Endothelial cell of umbilical vein (primary cell): ENCODE measurements at regions of chr19 and their contacts with region 1.

Region 1: DNA sequence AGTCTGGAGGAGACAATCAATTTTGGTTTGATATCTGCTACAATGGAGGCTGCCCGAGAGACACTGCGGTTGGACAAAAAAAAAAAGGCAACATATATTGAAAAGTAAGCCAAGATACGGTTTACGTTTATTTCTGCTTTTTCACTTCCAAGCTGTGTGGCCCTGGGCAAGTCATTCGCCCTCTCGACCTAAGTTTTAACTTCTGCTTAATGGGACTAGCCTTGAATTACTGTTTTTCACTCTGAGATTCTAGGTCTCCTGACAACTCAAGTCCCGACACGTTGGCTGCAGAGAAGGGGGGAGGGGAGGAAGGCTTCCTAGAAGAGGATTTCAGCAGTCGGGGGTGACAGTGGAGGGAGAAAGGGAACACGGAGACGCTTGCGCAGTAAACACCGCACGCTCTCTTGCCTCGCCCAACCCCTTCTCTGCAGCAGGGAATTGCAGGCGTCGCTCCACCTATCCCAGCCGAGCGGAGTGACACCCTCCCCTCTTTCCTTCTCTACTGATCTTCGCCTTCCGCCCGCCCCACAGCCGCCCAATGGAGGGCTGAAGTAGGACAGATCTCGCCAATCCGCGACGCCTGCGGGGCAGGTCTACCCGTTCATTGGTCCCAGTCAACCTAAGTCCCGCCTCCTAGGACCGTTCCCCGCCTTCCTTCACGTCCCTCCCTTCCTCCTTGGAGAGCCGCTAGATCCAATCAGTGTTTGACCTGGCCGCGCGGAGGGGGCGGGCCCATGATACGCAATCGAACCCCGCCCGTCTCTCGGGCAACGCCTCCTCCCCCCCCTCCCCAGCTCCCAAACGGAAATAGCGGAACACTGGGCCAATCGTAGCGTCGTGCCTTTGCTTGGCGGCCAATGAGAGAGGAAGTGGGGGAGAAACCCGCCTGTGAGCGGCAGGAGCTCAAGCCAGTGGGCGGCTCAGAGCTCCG is 529 bp upstream of the AP2A1 start:
- DNase-seq: peak; percentile 100
- H3K4me3 ChIP-seq: peak overlapping the region in 2 of 3 experiments; percentile 49 to 97
- H3K27ac ChIP-seq: peak overlapping the region; percentile 41
- H3K4me1 ChIP-seq: peaks cover 12% of the 10 kb centered on the region
- H3K27me3 ChIP-seq: no peaks in the 10 kb centered on the region
- CTCF ChIP-seq: no peak
- POLR2A ChIP-seq: peak; percentile 72

Region 2: GRCh38 chr19:49712397-49712859 is 53.8 kb before region 1 on chr19:
- CTCF ChIA-PET with region 1: interaction called, 4 read pairs
- POLR2A ChIA-PET with region 1: no interaction called
- dilution Hi-C with region 1: no loop called
- intact Hi-C with region 1: loop called (anchors 1 kb)
- DNase-seq: no peak
- H3K4me3 ChIP-seq: no peak overlapping the region
- H3K27ac ChIP-seq: no peak overlapping the region
- H3K4me1 ChIP-seq: no peaks in the 10 kb centered on the region
- H3K27me3 ChIP-seq: no peaks in the 10 kb centered on the region
- CTCF ChIP-seq: no peak
- POLR2A ChIP-seq: no peak

Region 3: GRCh38 chr19:49817964-49818648 is 51.8 kb after region 1 on chr19 and contains the start of gene MED25:
- CTCF ChIA-PET with region 1: no interaction called
- POLR2A ChIA-PET with region 1: no interaction called
- dilution Hi-C with region 1: no loop called
- intact Hi-C with region 1: loop called (anchors 1 kb)
- DNase-seq: peak; percentile 93
- H3K4me3 ChIP-seq: peak within 1 kb of the TSS; percentile 83 to 95 (median 90)
- H3K27ac ChIP-seq: peak within 1 kb of the TSS; percentile 89
- H3K4me1 ChIP-seq: peaks cover 19% of the 10 kb centered on the region
- H3K27me3 ChIP-seq: no peaks in the 10 kb centered on the region
- CTCF ChIP-seq: peak in 1 of 2 donors; percentile 14
- POLR2A ChIP-seq: peak; percentile 75
- total RNA-seq, gene MED25: 55.8 and 62.9 TPM in 2 replicates

Region 4: DNA sequence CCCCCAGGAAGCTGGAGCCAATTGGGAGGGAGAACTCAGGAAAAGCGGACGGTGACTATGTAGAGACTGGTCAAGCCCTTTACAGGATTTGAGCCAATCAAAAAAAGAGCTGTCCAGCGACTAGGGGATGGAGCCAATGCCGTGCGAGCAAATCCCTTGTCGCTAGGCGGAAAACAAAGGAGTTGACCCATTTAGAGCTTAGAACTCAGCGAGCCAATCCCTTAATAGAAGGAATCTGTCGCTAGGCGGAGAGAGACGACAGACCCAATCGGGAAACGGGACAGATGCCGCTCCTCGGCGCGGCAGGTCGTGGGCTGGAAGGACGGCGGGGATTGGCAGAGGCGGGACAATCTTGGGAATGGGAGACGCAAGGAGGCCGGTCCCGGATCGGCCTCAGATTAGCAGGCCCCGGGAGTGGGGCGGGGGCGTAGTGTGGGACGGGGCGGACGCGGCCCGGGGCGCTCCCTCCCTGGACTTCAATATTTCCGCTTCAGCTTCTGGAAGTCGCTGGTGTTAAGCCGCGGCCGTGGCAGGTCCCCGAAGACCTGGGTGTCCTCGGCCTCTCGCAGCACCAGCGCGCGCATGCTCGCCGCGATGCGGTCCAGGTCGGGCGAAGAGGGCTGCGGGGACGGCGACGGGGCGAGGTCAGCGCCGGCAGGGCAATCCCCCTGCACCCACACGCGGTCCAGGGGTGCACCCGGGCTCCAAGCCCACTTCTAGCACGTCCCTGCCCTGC is 103.3 kb after region 1 on chr19:
- CTCF ChIA-PET with region 1: no interaction called
- POLR2A ChIA-PET with region 1: interaction called, 4 read pairs
- dilution Hi-C with region 1: no loop called
- intact Hi-C with region 1: loop called (anchors 1 kb)
- DNase-seq: peak; percentile 100
- H3K4me3 ChIP-seq: peak overlapping the region; percentile 18 to 53 (median 30)
- H3K27ac ChIP-seq: peak overlapping the region; percentile 3
- H3K4me1 ChIP-seq: peaks cover 26% of the 10 kb centered on the region
- H3K27me3 ChIP-seq: no peaks in the 10 kb centered on the region
- CTCF ChIP-seq: no peak
- POLR2A ChIP-seq: peak; percentile 90